Panc1 (cell line): ENCODE measurements at regions of chr10 and their contacts with region 1.

Region 1: DNA sequence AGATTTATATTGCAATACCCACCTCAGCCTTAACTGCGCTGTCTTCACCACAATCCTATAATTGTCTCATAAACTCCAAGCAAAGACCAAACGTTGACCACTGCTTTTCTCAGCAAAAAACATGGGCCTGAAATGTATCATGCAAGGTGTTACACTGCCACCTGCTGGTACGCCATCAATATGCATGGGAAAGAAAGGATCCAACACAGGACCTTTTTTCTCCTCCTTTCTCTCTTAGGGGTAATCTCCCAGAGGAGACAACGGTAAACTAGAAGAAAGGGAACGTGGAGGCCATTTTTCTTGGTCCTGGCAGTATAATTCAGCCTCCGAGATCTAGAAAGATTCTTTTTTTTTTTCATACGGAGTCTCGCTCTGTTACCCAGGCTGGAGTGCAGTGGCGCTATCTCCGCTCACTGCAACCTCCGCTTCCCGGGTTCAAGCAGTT is 79.1 kb upstream of the MPP7 start:
- DNase-seq: peak; percentile 64
- ATAC-seq: peak; percentile 90
- H3K4me3 ChIP-seq: peak overlapping the region in 1 of 2 experiments; percentile 28; a peak in 2 of 4 replicates
- H3K27ac ChIP-seq: no peak overlapping the region
- H3K4me1 ChIP-seq: no peaks in the 10 kb centered on the region; the same call in 1 of the 2 replicates
- H3K27me3 ChIP-seq: peaks cover 2% of the 10 kb centered on the region; the same call in 1 of the 2 replicates
- CTCF ChIP-seq: peak; percentile 81

Region 2: DNA sequence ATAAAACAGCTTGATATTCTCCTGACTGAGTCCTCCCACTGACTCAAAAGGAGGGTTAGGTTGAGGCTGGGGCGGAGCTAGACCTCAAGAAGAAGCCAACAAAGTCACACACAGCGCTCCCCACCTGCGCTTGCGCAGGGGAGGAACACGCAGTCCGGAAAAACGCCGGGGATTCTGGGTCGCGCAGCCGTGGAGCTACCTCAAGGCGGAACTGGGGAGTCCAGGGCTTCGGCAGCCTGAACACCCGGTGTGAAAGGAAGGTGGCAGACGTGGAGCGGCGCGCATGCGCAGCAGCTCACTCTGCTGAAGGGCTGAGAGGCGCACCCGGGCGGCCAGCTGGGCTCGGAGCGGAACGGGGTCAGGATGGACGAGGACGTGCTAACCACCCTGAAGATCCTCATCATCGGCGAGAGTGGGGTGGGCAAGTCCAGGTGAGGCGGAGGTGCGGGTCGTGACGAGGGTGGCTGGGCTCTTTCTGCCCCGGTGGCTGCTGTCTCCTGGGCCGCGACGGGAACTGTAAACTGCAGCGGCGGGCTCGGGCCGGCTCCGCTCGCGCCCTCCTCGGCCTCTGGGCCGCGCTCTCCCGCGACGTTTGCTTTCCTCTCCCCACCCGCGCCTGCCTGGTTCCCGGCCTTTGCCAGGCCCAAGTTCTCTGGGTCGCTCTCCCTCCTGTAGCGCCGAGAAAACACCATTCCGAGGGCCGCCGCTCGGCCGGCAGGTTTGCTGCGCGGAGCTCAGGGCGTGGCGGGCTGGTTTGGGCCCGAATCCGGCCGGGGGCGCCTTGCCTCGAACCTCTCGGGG is 877.7 kb before region 1 on chr10 and contains the start of gene RAB18:
- CTCF ChIA-PET with region 1: interaction called, 14 read pairs
- POLR2A ChIA-PET with region 1: no interaction called
- in situ Hi-C with region 1: no loop called
- intact Hi-C with region 1: no loop called
- DNase-seq: peak; percentile 85
- ATAC-seq: peak; percentile 99
- H3K4me3 ChIP-seq: peak within 1 kb of the TSS; percentile 74 to 87
- H3K27ac ChIP-seq: peak within 1 kb of the TSS; percentile 92
- H3K4me1 ChIP-seq: peaks cover 2% of the 10 kb centered on the region; the same call in 1 of the 2 replicates
- H3K27me3 ChIP-seq: no peaks in the 10 kb centered on the region
- CTCF ChIP-seq: no peak
- total RNA-seq, gene RAB18: 55.4 TPM

Region 3: DNA sequence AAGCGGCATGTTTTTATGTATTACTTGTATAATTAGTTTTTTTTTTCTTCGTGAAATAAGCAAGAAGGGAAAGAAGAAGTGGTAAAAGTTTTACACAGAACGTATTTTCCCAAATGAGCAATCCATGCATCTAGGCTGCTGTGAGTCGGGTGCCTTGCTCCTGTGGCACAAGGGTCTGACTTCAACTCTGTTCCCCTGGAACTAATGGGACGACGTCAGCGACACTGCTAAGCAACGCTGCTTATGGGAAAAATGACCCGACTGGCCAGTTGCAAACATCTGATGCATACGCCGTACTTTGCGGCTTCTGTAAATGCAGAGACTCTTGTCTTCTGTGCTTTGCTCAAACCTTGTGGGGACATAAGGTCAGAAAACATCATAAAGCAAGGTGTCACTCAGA is 145.3 kb before region 1 on chr10:
- CTCF ChIA-PET with region 1: no interaction called
- POLR2A ChIA-PET with region 1: no interaction called
- in situ Hi-C with region 1: no loop called
- intact Hi-C with region 1: no loop called
- DNase-seq: no peak
- ATAC-seq: no peak
- H3K4me3 ChIP-seq: no peak overlapping the region
- H3K27ac ChIP-seq: no peak overlapping the region
- H3K4me1 ChIP-seq: no peaks in the 10 kb centered on the region
- H3K27me3 ChIP-seq: no peaks in the 10 kb centered on the region; the same call in 1 of the 2 replicates
- CTCF ChIP-seq: no peak

Region 4: DNA sequence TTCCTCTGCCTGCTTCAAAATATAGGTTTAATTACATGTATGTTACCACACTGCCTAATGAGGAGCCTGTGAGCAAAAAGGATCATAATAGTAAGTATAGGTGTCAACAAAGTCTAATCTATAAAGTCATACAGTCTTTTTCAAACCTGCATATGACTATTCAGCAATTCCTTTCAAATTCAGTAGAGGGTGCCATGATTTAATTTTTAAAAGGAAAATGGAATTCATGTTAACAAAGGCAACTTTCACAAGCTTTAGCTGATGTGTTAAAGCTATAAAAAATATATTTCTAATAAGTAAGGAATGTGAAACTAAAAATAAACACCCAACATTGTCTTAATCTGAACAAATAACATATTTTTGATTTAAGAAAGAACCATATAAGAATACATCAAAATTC is 131.1 kb before region 1 on chr10:
- CTCF ChIA-PET with region 1: interaction called, 6 read pairs
- POLR2A ChIA-PET with region 1: no interaction called
- in situ Hi-C with region 1: no loop called
- intact Hi-C with region 1: loop called (anchors 2 kb)
- DNase-seq: no peak
- ATAC-seq: no peak
- H3K4me3 ChIP-seq: no peak overlapping the region
- H3K27ac ChIP-seq: no peak overlapping the region
- H3K4me1 ChIP-seq: no peaks in the 10 kb centered on the region
- H3K27me3 ChIP-seq: no peaks in the 10 kb centered on the region; the same call in none of the 2 replicates
- CTCF ChIP-seq: peak; percentile 43; the same call in 1 of the 2 replicates